GM10248 (cell line): ENCODE measurements at regions of chr12 and their contacts with region 1.

Region 1: DNA sequence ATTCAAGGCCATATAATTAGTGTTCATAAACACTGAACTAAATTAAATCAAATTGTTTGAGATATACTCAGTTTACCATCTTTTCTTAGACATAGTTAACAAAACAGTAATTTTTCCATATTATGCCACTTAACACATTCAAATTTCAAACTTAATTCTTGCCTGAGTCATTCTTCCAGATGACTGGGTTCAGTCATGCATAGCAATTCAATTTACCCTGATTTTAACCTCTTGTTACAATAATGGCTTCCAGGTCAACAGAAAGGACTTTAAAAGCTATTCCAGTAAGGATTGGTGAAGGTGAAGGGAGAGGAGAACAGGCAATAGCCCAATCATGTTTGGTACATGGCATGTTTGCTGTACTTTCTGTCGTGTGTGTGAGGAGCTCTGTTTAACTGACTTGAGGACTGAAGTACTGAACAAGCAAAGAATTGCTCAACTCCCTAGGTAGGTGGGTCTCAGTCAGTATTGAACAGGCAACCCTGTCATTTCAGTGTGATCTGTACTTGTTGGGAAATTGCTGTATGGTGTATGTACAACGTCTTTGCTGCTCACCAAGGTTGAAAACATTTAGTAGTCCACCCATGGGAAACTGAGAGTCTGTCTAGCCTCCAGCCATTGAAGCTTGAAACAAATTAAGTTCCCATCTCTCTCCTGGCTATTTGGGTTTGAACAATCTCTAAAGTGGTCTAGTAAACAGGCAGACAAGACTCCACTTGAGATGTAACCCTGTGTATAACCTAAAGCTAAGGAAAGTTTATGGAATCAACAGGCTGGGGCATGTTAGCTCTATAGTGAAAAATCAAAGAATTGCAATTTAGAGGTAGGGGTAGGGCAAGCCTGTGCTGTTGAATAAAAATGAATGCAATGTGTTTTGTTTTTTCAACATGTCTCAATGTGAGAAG is 327.2 kb downstream of the BTG1 start:
- DNase-seq: no peak
- CTCF ChIP-seq: no peak

Region 2: DNA sequence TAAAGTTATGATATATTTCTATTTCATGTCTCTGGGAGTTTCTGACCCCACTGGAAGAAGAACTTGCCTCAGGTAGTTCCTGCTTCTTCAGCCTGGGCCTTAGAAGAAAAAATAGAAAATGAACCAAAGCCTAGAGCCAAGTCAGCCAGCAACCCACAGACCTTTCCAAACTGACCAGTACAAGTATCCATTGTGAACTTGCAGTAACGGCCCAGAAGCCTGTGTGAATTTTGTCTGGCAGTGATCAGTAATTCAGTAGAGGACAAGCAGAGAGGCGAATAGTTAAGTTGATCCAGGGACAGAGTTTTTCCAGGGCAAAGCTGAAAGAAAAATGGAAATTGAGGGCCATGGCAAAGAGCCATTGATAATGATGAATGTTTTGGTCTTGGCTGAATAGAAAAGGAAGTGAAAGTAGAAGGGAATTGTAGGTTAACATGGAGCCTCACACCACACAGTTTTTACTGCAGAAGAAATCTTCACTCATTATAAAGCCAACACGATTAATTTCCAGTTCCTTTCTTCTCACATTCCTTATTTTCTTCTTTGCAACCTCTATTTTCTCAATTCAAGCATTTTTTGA is 15.4 kb after region 1 on chr12:
- CTCF ChIA-PET with region 1: interaction called, 11 read pairs
- POLR2A ChIA-PET with region 1: no interaction called
- DNase-seq: no peak
- CTCF ChIP-seq: no peak

Region 3: GRCh38 chr12:91841822-91842221 is 23.3 kb after region 1 on chr12:
- CTCF ChIA-PET with region 1: interaction called, 26 read pairs
- POLR2A ChIA-PET with region 1: no interaction called
- DNase-seq: no peak
- CTCF ChIP-seq: no peak

Region 4: DNA sequence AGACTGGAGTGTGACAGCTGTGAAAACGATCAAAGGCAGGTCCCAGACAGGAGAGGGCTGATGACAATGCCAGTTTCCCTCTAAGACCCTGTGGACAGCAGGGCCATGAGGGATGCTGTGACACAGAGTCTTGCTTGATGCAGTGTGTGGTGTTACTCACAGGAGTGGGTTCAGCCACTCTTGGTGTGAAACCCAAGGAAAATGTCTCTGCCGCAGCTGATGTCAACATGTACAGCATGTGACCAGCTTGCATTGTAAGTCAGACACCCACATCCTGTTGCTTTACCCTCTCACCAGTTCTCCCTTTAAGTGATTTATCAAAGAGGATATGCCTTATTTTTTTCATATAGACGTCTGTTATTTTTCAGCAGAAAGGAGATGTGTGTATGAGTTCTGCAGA is 58.5 kb after region 1 on chr12:
- CTCF ChIA-PET with region 1: no interaction called
- POLR2A ChIA-PET with region 1: no interaction called
- DNase-seq: peak; percentile 10
- CTCF ChIP-seq: no peak

Region 5: DNA sequence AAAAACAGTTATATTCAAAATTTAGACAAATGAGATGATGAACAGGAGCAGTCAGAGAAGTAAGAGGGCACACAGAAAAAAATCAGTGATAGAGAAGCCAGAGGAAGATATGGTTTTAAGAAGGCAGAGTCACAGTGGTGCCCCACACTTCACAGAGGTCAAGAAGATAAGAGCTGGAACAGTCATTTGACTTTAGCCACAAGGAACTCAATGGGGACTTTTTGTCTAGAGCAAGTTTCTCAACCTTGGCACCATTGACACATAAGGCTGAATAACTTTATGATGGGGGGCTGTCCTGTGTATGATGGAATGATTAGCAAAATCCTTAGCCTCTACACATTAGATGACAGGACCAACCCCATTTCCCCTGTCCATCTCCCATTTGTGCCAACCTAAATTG is 711.5 kb after region 1 on chr12:
- CTCF ChIA-PET with region 1: no interaction called
- POLR2A ChIA-PET with region 1: no interaction called
- DNase-seq: no peak
- CTCF ChIP-seq: no peak